Mucosa of descending colon (tissue), 3 donors: ENCODE measurements at regions of chr3 and their contacts with region 1.

Region 1: DNA sequence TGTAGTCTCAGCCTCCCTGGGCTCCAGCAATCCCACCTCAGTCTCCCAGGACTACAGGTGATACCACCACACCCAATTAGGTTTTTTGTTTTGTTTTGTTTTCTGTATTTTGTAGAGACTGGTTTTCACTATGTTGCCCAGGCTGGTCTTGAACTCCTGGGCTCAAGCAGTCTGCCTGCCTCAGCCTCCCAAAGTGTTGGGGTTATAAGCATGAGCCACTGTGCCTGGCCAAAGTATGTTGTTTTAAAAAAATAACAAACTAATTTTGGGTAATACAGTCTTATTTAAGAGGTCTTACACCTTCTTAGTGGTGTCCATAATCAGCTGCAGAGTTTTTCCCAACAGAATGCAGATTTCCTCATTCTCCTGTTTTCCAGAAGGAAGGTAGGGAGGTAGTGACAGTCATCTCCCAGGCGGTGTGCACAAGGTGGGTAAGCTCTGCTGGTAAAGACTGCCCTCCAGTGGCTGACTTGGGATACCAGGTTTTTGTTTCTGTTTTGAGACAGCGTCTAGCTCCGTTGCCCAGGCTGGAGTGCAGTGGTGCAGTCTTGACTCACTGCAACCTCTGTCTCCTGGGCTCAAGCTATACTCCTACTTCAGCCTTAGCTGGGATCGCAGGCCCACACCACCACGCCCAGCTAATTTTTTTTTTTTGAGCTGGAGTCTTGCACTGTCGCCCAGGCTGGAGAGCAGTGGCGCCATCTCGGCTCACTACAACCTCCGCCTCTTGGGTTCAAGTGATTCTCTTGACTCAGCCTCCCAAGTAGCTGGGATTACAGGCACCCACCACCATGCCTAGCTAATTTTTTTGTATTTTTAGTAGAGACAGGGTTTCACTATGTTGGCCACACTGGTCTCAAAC is 58.4 kb downstream of the MAP6D1 start:
- DNase-seq: peak in 2 of 3 donors; percentile 65 to 90
- ATAC-seq: peak; percentile 96
- H3K4me3 ChIP-seq: no peak overlapping the region
- H3K4me1 ChIP-seq: peaks cover 10% of the 10 kb centered on the region
- CTCF ChIP-seq: peak; percentile 59

Region 2: DNA sequence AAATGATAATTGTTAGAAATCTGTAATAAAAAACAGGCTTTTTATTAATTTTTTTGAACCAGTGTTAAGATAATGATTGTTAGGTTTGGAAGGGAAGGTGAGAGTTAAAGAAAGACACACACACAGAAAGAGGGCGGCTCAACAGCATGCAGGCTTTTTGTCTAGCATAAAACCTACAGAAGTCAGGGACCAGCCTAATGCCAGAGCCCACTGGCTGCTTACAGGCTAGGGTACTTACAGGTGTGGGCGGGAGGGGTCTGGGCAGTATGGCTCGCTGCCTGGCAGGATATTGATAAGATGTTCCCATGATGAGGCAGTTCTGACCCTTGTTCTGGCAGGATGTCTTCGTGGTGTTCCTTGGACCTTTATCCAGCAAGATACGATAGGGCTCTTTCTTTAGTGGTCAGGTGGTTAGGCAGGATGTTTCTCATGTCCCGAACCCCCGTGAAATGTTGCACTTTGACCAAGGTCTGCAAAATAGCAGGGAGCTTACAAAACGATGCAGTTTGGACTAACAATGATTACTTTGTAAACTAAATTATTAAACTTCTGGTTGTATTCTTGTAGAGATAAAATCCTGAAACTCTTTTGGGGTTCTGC is 871.4 kb before region 1 on chr3:
- intact Hi-C with region 1: no loop called
- DNase-seq: no peak
- ATAC-seq: no peak
- H3K4me3 ChIP-seq: no peak overlapping the region
- H3K4me1 ChIP-seq: no peaks in the 10 kb centered on the region
- CTCF ChIP-seq: no peak

Region 3: GRCh38 chr3:183468424-183468823 is 298.6 kb before region 1 on chr3:
- intact Hi-C with region 1: loop called (anchors 5 kb)
- DNase-seq: no peak
- ATAC-seq: no peak
- H3K4me3 ChIP-seq: no peak overlapping the region
- H3K4me1 ChIP-seq: peaks cover 6% of the 10 kb centered on the region
- CTCF ChIP-seq: no peak